ENCODE measurements at regions of chr2 and their contacts with region 1.

Region 1: GRCh38 chr2:162221064-162221463 is 22.2 kb downstream of the FAP start:
- H3K4me3 Mint-ChIP-seq: no peak overlapping the region
- H3K27ac Mint-ChIP-seq: no peak overlapping the region
- H3K4me1 Mint-ChIP-seq: peaks cover 6% of the 10 kb centered on the region
- H3K27me3 Mint-ChIP-seq: no peaks in the 10 kb centered on the region

Region 2: GRCh38 chr2:162153608-162154224 is 67.3 kb before region 1 on chr2:
- intact Hi-C with region 1: loop called (anchors 5 kb)
- H3K4me3 Mint-ChIP-seq: no peak overlapping the region
- H3K27ac Mint-ChIP-seq: no peak overlapping the region
- H3K4me1 Mint-ChIP-seq: peaks cover 6% of the 10 kb centered on the region
- H3K27me3 Mint-ChIP-seq: peaks cover 7% of the 10 kb centered on the region

Region 3: GRCh38 chr2:162261032-162261945 is 40.2 kb after region 1 on chr2:
- intact Hi-C with region 1: loop called (anchors 5 kb)
- H3K4me3 Mint-ChIP-seq: peak overlapping the region; percentile 57
- H3K27ac Mint-ChIP-seq: peak overlapping the region; percentile 90
- H3K4me1 Mint-ChIP-seq: peaks cover 35% of the 10 kb centered on the region
- H3K27me3 Mint-ChIP-seq: no peaks in the 10 kb centered on the region

Region 4: DNA sequence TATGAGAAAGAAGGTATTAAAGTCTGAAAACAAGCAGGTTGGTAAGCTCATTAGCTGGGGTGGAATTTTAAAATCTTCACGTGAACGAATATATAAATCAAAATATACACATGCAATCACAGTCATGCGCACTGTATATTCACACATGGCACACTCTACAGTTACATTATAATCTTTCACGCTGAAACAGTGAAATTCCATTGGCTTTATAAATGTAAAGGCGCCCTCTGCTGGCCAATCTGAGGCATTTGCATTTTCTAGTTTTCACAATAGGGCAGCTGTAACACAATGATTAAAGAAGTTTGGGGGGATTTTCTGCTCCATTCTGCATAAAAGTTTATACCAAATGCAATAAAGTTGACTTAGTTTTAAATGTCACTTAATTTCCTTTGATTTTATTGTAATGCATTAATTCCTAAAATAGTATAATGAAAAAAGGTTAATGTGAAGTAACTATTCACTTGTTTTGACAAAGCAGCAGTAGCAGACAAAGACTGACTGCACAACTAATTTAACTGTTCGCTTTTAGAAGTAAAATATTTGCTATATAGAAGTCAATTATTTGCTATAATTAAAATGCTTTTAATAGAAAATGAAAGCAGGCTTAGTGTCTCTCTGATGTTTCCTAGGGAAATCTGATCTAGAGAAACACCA is 80.2 kb after region 1 on chr2:
- intact Hi-C with region 1: loop called (anchors 1 kb)
- H3K4me3 Mint-ChIP-seq: no peak overlapping the region
- H3K27ac Mint-ChIP-seq: no peak overlapping the region
- H3K4me1 Mint-ChIP-seq: no peaks in the 10 kb centered on the region
- H3K27me3 Mint-ChIP-seq: no peaks in the 10 kb centered on the region

Measured in dendritic cell treated with granulocyte-macrophage colony-stimulating factor and Interleukin-4, amounts not matched to agents 40 ng/mL and 50 ng/mL, for 4 days (primary cell).